ENCODE measurements at regions of chr6 and their contacts with region 1.

Region 1: GRCh38 chr6:157756708-157757429 is 66.2 kb upstream of the SNX9 start:
- DNase-seq: peak; percentile 74 to 81 (median 76)
- H3K4me3 ChIP-seq: no peak overlapping the region
- H3K4me3 Mint-ChIP-seq: peak overlapping the region; percentile 58 to 62
- H3K27ac ChIP-seq: peak overlapping the region in 1 of 2 donors; percentile 15
- H3K27ac Mint-ChIP-seq: peak overlapping the region; percentile 68 to 94 (median 90)
- H3K4me1 ChIP-seq: peaks cover 11 to 16% of the 10 kb centered on the region in 2 donors
- H3K4me1 Mint-ChIP-seq: peaks cover 41% of the 10 kb centered on the region
- H3K27me3 ChIP-seq: peaks cover 0 to 4% of the 10 kb centered on the region in 2 donors
- H3K27me3 Mint-ChIP-seq: peaks cover 12 to 23% (median 16%) of the 10 kb centered on the region in 3 donors
- CTCF ChIP-seq: peak; percentile 91

Region 2: GRCh38 chr6:157592525-157592924 is 164.3 kb before region 1 on chr6:
- intact Hi-C with region 1: no loop called
- DNase-seq: no peak
- H3K4me3 ChIP-seq: no peak overlapping the region
- H3K4me3 Mint-ChIP-seq: peak overlapping the region in 1 of 2 donors; percentile 62
- H3K27ac ChIP-seq: no peak overlapping the region
- H3K27ac Mint-ChIP-seq: no peak overlapping the region
- H3K4me1 ChIP-seq: no peaks in the 10 kb centered on the region
- H3K4me1 Mint-ChIP-seq: no peaks in the 10 kb centered on the region
- H3K27me3 ChIP-seq: no peaks in the 10 kb centered on the region
- H3K27me3 Mint-ChIP-seq: peaks cover 0 to 5% (median 4%) of the 10 kb centered on the region in 3 donors
- CTCF ChIP-seq: no peak

Region 3: GRCh38 chr6:157798851-157799250 is 42.0 kb after region 1 on chr6:
- intact Hi-C with region 1: loop called in 1 of 2 experiments (anchors 5 kb)
- DNase-seq: peak in 1 of 3 donors; percentile 61
- H3K4me3 ChIP-seq: no peak overlapping the region
- H3K4me3 Mint-ChIP-seq: no peak overlapping the region
- H3K27ac ChIP-seq: no peak overlapping the region
- H3K27ac Mint-ChIP-seq: peak overlapping the region in 2 of 7 donors; percentile 21 to 70
- H3K4me1 ChIP-seq: peaks cover 0 to 5% of the 10 kb centered on the region in 2 donors
- H3K4me1 Mint-ChIP-seq: peaks cover 9% of the 10 kb centered on the region
- H3K27me3 ChIP-seq: no peaks in the 10 kb centered on the region
- H3K27me3 Mint-ChIP-seq: peaks cover 0 to 4% (median 0%) of the 10 kb centered on the region in 3 donors
- CTCF ChIP-seq: no peak

Region 4: DNA sequence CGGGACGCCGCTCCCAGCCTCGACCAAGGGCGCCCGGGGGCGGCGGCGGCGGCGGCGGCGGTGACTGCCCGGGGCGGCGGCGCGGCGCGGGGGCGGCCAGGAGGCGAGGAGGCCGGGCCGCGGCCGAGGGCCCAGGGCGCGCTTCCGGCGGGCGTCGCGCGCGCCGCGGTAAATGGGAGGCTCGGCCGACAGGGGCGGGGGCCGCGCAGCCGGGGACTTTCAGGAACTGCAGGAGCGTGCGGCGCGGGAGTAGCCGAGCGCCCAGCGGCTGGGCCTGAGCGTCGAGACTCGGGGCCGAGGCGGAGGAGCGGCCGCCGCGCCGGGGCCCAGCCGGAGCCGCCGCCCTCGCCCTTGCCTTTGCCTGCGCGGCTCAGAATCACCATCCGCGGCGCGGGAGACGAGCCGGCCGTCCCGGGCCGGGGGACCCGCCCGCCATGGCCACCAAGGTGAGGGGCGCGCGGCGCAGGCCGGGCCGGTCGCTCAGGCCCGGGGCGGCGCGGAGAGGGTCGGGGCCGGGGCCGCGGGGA is 66.2 kb after region 1 on chr6 and contains the start of gene SNX9:
- intact Hi-C with region 1: loop called (anchors 5 kb)
- DNase-seq: peak; percentile 75 to 87 (median 78)
- H3K4me3 ChIP-seq: peak within 1 kb of the TSS; percentile 72 to 92 (median 92)
- H3K4me3 Mint-ChIP-seq: peak within 1 kb of the TSS; percentile 95 to 97
- H3K27ac ChIP-seq: peak within 1 kb of the TSS in 1 of 2 donors; percentile 83
- H3K27ac Mint-ChIP-seq: peak within 1 kb of the TSS; percentile 66 to 94 (median 92)
- H3K4me1 ChIP-seq: peaks cover 13 to 21% of the 10 kb centered on the region in 2 donors
- H3K4me1 Mint-ChIP-seq: peaks cover 19% of the 10 kb centered on the region
- H3K27me3 ChIP-seq: peaks cover 9 to 29% of the 10 kb centered on the region in 2 donors
- H3K27me3 Mint-ChIP-seq: peaks cover 35 to 56% (median 37%) of the 10 kb centered on the region in 3 donors
- CTCF ChIP-seq: no peak
- polyA plus RNA-seq, gene SNX9: 5.5 to 8.1 (median 7.2) TPM

Region 5: DNA sequence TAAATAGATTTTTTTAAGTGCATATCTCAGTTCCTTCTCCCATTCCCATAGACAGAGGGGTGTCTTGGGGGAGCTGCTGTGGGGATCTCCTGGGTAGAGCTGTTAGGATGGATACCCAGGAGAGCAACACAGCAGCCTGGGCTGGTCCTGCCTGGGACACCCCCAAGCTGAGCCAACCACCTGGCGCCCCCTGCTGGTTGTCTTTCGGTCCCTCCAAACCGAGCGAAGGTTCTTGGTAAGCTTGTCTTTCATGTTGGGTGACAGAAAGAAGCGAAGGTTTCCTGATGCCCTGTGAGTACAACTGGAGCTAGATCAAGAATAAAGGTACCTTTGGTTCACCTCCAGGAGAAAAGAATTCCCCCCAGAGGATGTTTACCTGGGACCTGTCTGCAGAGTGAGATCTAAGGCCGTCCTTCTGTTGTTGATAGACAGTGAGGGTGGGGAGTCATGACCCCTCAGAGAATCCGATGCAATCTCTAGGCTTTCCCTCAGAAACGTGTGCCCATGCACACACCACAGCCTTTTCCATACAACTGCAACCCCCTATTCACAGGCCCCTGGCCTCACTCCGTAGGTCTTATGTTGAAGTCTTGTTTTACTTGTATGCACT is 117.0 kb after region 1 on chr6:
- intact Hi-C with region 1: loop called (anchors 2 kb)
- DNase-seq: peak; percentile 56 to 72 (median 67)
- H3K4me3 ChIP-seq: no peak overlapping the region
- H3K4me3 Mint-ChIP-seq: no peak overlapping the region
- H3K27ac ChIP-seq: no peak overlapping the region
- H3K27ac Mint-ChIP-seq: no peak overlapping the region
- H3K4me1 ChIP-seq: no peaks in the 10 kb centered on the region
- H3K4me1 Mint-ChIP-seq: no peaks in the 10 kb centered on the region
- H3K27me3 ChIP-seq: no peaks in the 10 kb centered on the region
- H3K27me3 Mint-ChIP-seq: peaks cover 0 to 4% (median 0%) of the 10 kb centered on the region in 3 donors
- CTCF ChIP-seq: peak; percentile 92